WTC11 (cell line): ENCODE measurements at regions of chr17 and their contacts with region 1.

Region 1: GRCh38 chr17:78360371-78361224 is 721 bp upstream of the SOCS3 start:
- DNase-seq: peak; percentile 100
- ATAC-seq: peak; percentile 59
- H3K4me3 Mint-ChIP-seq: peak overlapping the region; percentile 74
- H3K27ac Mint-ChIP-seq: peak overlapping the region; percentile 93
- H3K4me1 Mint-ChIP-seq: peaks cover 71% of the 10 kb centered on the region
- H3K27me3 Mint-ChIP-seq: peaks cover 16% of the 10 kb centered on the region
- CTCF ChIP-seq: peak; percentile 94

Region 2: GRCh38 chr17:78313735-78314648 is 46.6 kb before region 1 on chr17:
- CTCF ChIA-PET with region 1: interaction called, 23 read pairs
- POLR2A ChIA-PET with region 1: interaction called, 11 read pairs
- DNase-seq: peak; percentile 84
- ATAC-seq: peak; percentile 77
- H3K4me3 Mint-ChIP-seq: peak overlapping the region; percentile 71
- H3K27ac Mint-ChIP-seq: peak overlapping the region; percentile 58; the same call in 1 of the 2 replicates
- H3K4me1 Mint-ChIP-seq: peaks cover 46% of the 10 kb centered on the region
- H3K27me3 Mint-ChIP-seq: peaks cover 6% of the 10 kb centered on the region
- CTCF ChIP-seq: no peak

Region 3: GRCh38 chr17:78378225-78379130 is 17.9 kb after region 1 on chr17 and contains the start of gene PGS1:
- CTCF ChIA-PET with region 1: interaction called, 86 read pairs
- POLR2A ChIA-PET with region 1: interaction called, 10 read pairs
- DNase-seq: peak; percentile 70
- ATAC-seq: peak; percentile 5; the same call in 1 of the 2 replicates
- H3K4me3 Mint-ChIP-seq: peak within 1 kb of the TSS; percentile 95
- H3K27ac Mint-ChIP-seq: peak within 1 kb of the TSS; percentile 97
- H3K4me1 Mint-ChIP-seq: peaks cover 68% of the 10 kb centered on the region
- H3K27me3 Mint-ChIP-seq: no peaks in the 10 kb centered on the region
- CTCF ChIP-seq: no peak
- total RNA-seq, gene PGS1: 45.4 to 51.4 TPM (median 47.0 TPM) in 3 replicates

Region 4: DNA sequence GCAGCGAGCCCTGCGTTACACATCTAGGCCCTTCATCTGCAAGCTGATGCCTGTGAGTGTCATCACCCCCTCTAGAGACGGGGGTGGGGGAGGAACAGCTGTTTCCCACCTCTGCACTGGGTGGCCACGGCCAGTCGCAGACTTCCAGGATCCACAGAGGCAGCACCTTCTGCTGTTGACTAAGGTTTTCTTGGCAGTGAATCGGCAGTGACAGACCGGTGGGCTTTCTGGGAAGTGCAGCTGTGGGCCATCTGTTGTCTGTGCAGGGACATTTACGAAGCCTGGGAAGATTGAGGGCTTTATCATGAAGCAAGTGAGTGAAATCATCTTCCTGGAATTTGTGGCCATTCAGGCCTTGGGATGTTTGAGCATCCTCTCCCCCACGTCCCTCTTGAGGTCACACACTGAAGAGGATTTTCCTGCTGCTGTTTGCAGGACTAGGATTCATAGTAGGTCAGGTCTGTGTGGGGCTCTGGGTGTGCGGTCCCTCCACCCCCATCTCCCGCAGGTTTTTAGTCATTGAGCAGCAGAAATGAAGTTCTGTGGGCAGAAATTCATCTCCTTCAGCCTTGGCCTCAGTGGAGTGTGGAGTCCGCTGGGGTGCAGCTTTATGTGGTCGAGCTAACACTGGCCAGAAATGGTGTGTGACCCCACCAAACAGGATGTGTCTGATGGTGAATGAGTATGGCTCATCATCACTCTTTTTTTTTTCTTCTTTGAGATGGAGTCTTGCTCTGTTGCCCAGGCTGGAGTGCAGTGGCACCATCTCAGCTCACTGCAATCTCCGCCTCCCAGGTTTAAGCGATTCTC is 29.8 kb after region 1 on chr17:
- CTCF ChIA-PET with region 1: interaction called, 24 read pairs
- POLR2A ChIA-PET with region 1: interaction called, 9 read pairs
- DNase-seq: no peak
- ATAC-seq: peak; percentile 59
- H3K4me3 Mint-ChIP-seq: no peak overlapping the region
- H3K27ac Mint-ChIP-seq: peak overlapping the region; percentile 89
- H3K4me1 Mint-ChIP-seq: peaks cover 44% of the 10 kb centered on the region
- H3K27me3 Mint-ChIP-seq: no peaks in the 10 kb centered on the region
- CTCF ChIP-seq: 0 out of 2 replicates have a peak, but pooled peaks have one; percentile 14

Region 5: GRCh38 chr17:78412403-78412802 is 51.8 kb after region 1 on chr17:
- CTCF ChIA-PET with region 1: interaction called, 31 read pairs
- POLR2A ChIA-PET with region 1: interaction called, 5 read pairs
- DNase-seq: no peak
- ATAC-seq: peak; percentile 25; the same call in 1 of the 2 replicates
- H3K4me3 Mint-ChIP-seq: no peak overlapping the region
- H3K27ac Mint-ChIP-seq: peak overlapping the region; percentile 27; the same call in 1 of the 2 replicates
- H3K4me1 Mint-ChIP-seq: peaks cover 13% of the 10 kb centered on the region
- H3K27me3 Mint-ChIP-seq: no peaks in the 10 kb centered on the region
- CTCF ChIP-seq: no peak

Region 6: GRCh38 chr17:78474614-78475146 is 114.1 kb after region 1 on chr17:
- CTCF ChIA-PET with region 1: no interaction called
- POLR2A ChIA-PET with region 1: no interaction called
- DNase-seq: no peak
- ATAC-seq: no peak
- H3K4me3 Mint-ChIP-seq: no peak overlapping the region
- H3K27ac Mint-ChIP-seq: no peak overlapping the region
- H3K4me1 Mint-ChIP-seq: peaks cover 4% of the 10 kb centered on the region
- H3K27me3 Mint-ChIP-seq: no peaks in the 10 kb centered on the region
- CTCF ChIP-seq: no peak